Spleen (tissue), 13 donors: ENCODE measurements at regions of chr7 and their contacts with region 1.

Region 1: GRCh38 chr7:86469680-86470295 is 173.9 kb upstream of the GRM3 start:
- DNase-seq: no peak
- H3K4me3 ChIP-seq: no peak overlapping the region
- H3K27ac ChIP-seq: no peak overlapping the region
- H3K4me1 ChIP-seq: no peaks in the 10 kb centered on the region
- H3K27me3 ChIP-seq: no peaks in the 10 kb centered on the region
- CTCF ChIP-seq: peak in 9 of 11 experiments; percentile 15 to 67 (median 51)
- POLR2A ChIP-seq: no peak

Region 2: GRCh38 chr7:85890244-85890811 is 579.5 kb before region 1 on chr7:
- intact Hi-C with region 1: loop called (anchors 10 kb)
- DNase-seq: no peak
- H3K4me3 ChIP-seq: no peak overlapping the region
- H3K27ac ChIP-seq: no peak overlapping the region
- H3K4me1 ChIP-seq: no peaks in the 10 kb centered on the region
- H3K27me3 ChIP-seq: no peaks in the 10 kb centered on the region
- CTCF ChIP-seq: peak in 6 of 11 experiments; percentile 12 to 39 (median 28)
- POLR2A ChIP-seq: no peak